Heart left ventricle (tissue), 16 donors: ENCODE measurements at regions of chr11 and their contacts with region 1.

Region 1: GRCh38 chr11:18731949-18732821 is 6.2 kb upstream of the IGSF22 start:
- DNase-seq: no peak
- ATAC-seq: peak in 3 of 4 donors; percentile 48 to 52 (median 49)
- H3K4me3 ChIP-seq: no peak overlapping the region
- H3K27ac ChIP-seq: no peak overlapping the region
- H3K4me1 ChIP-seq: peaks cover 0 to 6% (median 0%) of the 10 kb centered on the region in 12 donors
- H3K27me3 ChIP-seq: no peaks in the 10 kb centered on the region
- CTCF ChIP-seq: peak; percentile 88 to 98 (median 93)
- POLR2A ChIP-seq: no peak

Region 2: DNA sequence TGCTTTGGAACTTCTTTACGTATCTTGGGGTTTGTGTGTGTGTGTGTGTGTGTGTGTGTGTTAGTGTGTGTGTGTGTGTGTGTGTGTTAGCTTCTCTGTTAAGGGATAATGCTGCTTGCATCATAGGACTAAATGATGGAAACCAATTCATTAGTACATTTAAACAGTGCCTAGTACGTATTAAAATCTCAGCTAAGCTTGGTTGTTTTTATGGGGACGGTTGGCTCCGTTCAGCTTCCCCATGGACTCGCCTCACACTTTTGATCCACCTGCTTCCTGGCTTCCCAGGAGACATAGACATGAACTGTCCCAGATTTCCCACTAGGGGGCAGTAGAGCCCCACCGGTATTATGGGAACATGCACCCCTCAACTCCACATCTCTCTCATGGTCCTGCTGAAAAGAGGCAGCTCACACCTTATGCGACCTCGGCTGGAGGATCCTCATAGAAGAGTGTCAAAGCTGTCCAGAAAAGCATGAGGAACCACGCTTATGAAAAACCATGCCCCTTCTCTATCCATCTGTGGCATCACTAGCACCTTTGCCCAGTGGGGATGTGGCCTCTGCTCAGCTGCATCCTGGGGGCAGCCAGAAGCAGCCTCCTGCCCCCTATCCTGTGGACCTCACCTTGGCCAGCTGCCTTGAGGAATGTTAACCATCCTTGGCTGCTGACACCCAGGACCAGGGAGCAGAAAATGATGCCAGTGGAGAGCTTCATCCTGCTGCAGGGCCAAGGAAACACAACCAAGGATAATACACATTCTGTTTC is 616.6 kb before region 1 on chr11:
- intact Hi-C with region 1: loop called in 6 of 10 experiments (anchors 5 to 10 kb)
- DNase-seq: peak in 4 of 5 donors; percentile 20 to 49 (median 30)
- ATAC-seq: peak; percentile 26 to 86 (median 80)
- H3K4me3 ChIP-seq: no peak overlapping the region
- H3K27ac ChIP-seq: no peak overlapping the region
- H3K4me1 ChIP-seq: no peaks in the 10 kb centered on the region
- H3K27me3 ChIP-seq: peaks cover 0 to 23% (median 5%) of the 10 kb centered on the region in 9 donors
- CTCF ChIP-seq: peak; percentile 70 to 91 (median 84)
- POLR2A ChIP-seq: no peak

Region 3: DNA sequence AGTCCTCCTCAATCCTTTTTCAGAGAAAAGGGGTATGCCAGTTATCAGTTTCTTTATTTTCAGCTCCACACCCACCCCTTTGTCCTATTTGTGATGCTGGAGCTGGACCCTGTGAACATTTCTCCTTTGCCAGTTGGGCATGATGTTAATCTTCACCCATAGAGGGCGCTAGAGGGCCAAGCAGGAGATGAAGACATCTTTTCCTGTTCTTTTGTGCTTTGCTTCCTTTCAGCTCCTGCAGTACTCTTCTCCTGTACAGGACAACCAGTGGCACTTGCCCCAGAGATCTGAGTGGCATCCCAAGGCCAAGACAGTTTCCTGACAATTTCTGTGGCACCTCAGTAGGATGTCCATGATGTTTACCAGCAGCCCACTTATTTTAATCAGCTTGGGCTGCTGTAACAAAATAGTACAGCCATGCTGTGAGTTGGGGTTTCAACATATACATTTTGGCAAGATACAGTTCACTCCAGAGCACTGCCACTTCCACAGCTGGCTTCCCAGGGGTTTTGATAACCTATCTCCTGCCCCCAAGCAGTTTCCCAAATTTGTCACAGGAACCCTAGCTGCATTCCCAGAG is 488.3 kb before region 1 on chr11:
- intact Hi-C with region 1: loop called in 1 of 10 experiments (anchors 10 kb)
- DNase-seq: no peak
- ATAC-seq: no peak
- H3K4me3 ChIP-seq: no peak overlapping the region
- H3K27ac ChIP-seq: no peak overlapping the region
- H3K4me1 ChIP-seq: no peaks in the 10 kb centered on the region
- H3K27me3 ChIP-seq: peaks cover 0 to 8% (median 0%) of the 10 kb centered on the region in 9 donors
- CTCF ChIP-seq: peak in 11 of 12 donors; percentile 26 to 81 (median 46)
- POLR2A ChIP-seq: no peak

Region 4: DNA sequence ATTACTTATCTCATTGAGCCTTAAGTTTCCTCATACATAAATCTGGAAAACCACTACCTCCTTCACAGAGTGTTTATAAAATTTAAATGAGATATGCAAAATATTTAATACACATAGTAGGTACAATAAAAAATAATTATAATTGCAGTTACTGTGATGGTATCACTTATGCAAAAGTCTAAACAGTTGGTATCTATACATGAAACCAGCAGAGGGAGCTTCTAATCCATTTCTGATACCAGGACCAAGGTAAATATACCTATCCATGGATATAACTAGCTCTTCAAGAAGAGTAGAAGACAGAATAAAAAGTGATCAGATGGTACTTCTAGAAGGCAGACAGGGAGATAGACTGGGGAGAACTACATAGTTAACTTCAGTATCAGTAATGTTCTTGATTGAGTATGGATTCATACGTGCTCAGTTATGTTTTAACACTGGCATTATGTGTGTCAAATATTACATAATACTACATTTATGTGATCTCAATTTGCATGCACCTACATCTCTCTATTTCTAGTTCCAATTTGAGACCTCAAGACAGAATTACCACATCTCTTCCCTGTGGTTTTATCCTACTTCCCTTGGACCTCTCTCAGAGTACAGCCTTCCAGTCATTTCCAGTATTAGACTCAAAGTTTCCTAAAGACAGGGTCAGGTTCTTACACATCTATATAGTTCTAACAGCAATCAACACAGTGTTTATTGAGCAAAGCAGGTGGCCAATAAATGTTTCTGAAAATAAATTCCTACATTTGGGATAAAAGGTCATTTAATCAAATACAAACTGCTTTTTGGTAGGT is 191.8 kb before region 1 on chr11:
- intact Hi-C with region 1: loop called in 6 of 10 experiments (anchors 5 to 10 kb)
- DNase-seq: no peak
- ATAC-seq: no peak
- H3K4me3 ChIP-seq: no peak overlapping the region
- H3K27ac ChIP-seq: no peak overlapping the region
- H3K4me1 ChIP-seq: no peaks in the 10 kb centered on the region
- H3K27me3 ChIP-seq: no peaks in the 10 kb centered on the region
- CTCF ChIP-seq: peak in 11 of 12 donors; percentile 14 to 46 (median 38)
- POLR2A ChIP-seq: no peak

Region 5: GRCh38 chr11:18692941-18693760 is 39.0 kb before region 1 on chr11:
- intact Hi-C with region 1: loop called in 1 of 10 experiments (anchors 5 kb)
- DNase-seq: no peak
- ATAC-seq: no peak
- H3K4me3 ChIP-seq: no peak overlapping the region
- H3K27ac ChIP-seq: no peak overlapping the region
- H3K4me1 ChIP-seq: peaks cover 0 to 11% (median 2%) of the 10 kb centered on the region in 12 donors
- H3K27me3 ChIP-seq: no peaks in the 10 kb centered on the region
- CTCF ChIP-seq: no peak
- POLR2A ChIP-seq: no peak

Region 6: DNA sequence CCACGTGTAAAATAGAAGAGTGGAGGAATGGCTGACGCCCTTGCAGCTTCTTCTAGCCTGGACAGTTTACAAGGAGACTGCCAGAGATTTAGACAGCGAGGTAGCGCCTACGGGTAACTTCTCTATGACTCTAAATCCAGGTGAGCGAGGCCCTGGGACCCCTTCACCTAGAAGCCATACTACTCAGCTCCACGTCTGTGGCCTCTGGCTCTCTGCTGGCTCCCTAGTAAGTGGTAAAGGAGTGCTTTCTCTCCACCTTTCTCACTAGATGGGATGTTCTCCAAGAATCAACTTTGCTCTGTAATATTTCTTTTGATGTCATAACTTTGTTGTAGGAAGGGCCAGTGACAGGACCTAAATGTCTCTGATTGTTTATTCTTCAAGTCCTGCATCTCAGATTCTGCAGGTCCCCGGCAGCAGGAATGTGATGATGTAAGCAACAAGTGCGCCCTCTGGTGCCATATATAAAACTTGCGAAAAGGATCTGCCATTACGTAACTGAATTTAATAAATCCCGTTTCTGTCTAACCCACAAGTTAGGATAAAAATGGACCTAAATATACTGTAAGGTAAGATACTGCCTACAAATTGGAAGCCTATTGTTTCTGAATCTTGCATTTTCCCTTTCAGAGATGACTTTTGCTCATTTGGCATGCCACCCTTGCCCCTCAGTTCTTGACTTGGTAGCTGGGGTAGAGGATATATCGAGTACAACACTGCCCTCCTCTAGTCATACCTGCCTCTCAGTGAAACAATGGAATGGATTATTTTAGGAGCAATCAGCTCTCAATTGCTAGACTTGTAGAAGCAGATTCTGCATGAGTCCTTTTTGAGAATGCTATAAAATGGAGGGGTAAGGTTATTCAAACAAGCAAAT is 70.4 kb after region 1 on chr11:
- intact Hi-C with region 1: no loop called
- DNase-seq: peak in 3 of 5 donors; percentile 31 to 49 (median 35)
- ATAC-seq: peak in 1 of 4 donors; percentile 33
- H3K4me3 ChIP-seq: no peak overlapping the region
- H3K27ac ChIP-seq: no peak overlapping the region
- H3K4me1 ChIP-seq: no peaks in the 10 kb centered on the region
- H3K27me3 ChIP-seq: peaks cover 0 to 5% (median 0%) of the 10 kb centered on the region in 9 donors
- CTCF ChIP-seq: peak; percentile 22 to 70 (median 55)
- POLR2A ChIP-seq: no peak